ENCODE measurements at regions of chr2 and their contacts with region 1.

Region 1: DNA sequence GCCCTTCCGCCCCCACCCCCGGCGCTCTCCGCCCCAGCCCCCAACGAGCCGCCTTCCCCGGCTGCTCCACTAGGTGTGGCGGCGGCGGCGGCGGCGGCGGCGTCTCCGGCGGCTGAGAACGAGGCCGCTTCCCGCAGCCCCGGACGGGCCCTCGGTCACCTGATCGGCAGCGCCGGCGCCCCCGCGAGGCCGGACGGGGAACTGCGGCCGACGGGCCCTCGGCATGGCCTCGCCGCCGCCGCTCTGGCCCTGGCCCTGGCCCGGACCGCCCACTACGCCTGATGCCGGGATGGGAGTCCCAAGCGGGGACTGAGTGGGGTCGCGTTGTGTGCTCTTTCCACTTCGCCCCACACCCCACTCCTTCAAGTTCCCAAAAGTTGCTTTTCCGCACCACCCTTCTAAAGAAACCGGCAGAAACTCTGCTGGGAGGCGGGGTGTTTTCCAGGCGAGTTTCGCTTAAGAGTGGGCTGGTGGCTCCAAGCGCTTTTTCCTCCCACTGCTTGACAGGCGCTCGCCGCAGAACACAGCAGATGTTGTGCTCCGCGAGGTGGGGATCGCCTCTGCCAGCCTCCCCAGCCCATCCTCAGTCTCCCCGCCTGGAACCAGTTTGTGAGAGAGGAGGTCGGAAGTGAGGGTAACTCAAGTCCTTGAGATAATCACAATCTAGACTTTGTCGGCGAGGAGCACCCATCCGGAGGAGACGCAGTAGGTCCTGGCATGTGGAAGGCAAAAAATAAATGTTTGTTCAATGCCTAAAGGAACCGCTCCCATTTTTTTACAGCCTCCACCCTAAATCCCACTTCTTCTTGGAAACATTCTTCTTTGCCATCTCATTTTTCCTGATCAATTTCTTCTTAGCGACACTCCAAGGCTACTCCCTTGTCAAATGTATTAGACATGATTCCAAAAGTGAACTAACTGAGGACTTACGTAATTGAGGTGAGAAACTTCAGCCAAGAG is at the start of gene NCKAP1:
- DNase-seq: peak; percentile 96
- H3K4me3 Mint-ChIP-seq: peak within 1 kb of the TSS; percentile 85
- H3K27ac Mint-ChIP-seq: peak within 1 kb of the TSS; percentile 66
- H3K4me1 Mint-ChIP-seq: peaks cover 22% of the 10 kb centered on the region
- H3K27me3 Mint-ChIP-seq: peaks cover 72% of the 10 kb centered on the region
- total RNA-seq, gene NCKAP1: 14.5 TPM in 2 replicates

Region 2: GRCh38 chr2:182715896-182716668 is 322.5 kb before region 1 on chr2 and contains the start of gene DNAJC10:
- intact Hi-C with region 1: loop called (anchors 2 kb)
- DNase-seq: peak; percentile 97
- H3K4me3 Mint-ChIP-seq: no peak within 1 kb of the TSS
- H3K27ac Mint-ChIP-seq: no peak within 1 kb of the TSS
- H3K4me1 Mint-ChIP-seq: peaks cover 8% of the 10 kb centered on the region
- H3K27me3 Mint-ChIP-seq: peaks cover 11% of the 10 kb centered on the region
- total RNA-seq, gene DNAJC10: 68.2 and 75.1 TPM in 2 replicates

Region 3: DNA sequence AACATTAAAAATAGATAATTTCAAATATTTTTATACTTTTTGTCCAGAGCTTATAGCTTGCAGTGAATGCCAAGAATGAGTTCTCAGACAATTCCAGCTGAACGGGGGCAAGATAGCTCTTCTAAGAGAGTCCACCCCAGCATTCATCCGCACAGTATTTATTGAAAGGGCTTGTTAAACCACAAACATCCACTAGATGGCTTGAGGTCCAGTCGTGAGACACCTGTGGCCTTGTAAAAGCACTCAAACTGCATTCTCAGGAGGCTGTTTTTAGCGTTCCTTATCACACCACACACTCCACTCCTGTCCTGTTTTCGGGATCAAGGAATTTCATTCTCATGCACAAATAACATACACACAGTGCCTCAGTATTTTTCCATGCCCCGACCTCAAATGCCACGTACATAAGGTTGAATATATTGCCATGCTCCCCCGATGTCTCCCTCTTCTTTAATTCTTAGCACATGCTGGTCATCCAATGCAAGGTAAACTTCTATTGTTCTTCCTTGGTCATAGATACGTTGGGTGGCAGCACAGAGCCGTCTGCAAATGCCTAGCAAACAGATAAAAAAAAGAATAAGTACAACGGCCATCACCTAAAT is 275.2 kb before region 1 on chr2:
- intact Hi-C with region 1: no loop called
- DNase-seq: peak; percentile 60
- H3K4me3 Mint-ChIP-seq: no peak overlapping the region
- H3K27ac Mint-ChIP-seq: no peak overlapping the region
- H3K4me1 Mint-ChIP-seq: peaks cover 7% of the 10 kb centered on the region
- H3K27me3 Mint-ChIP-seq: no peaks in the 10 kb centered on the region

Region 4: DNA sequence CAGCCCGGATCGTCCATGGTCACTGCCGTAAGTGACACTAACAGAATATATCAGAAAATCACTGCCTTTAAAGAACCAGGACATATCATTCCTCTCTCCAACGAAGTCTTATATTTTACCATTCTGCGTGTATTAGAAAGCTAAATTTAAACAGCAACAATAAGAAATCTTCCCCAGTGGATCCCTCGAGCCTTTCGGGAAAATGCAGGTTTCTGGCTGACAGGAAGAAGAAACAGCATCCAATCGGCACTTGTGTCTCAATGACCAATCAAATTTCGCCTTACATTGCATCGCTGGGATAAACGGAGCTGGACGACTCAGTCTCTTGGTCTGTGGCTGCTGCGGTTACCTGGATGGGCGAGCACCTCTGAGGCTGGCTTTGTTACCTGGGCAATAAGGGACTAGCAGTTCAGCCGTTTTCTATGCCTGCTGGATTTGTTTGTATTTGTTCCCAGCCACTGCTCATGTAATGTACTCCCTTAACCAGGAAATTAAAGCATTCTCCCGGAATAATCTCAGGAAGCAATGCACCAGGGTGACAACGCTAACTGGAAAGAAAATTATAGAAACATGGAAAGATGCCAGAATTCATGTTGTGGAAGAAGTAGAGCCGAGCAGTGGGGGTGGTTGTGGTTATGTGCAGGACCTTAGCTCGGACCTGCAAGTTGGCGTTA is 40.0 kb after region 1 on chr2 and contains the start of gene DUSP19:
- intact Hi-C with region 1: loop called (anchors 1 kb)
- DNase-seq: peak; percentile 95
- H3K4me3 Mint-ChIP-seq: peak within 1 kb of the TSS; percentile 85
- H3K27ac Mint-ChIP-seq: peak within 1 kb of the TSS; percentile 59
- H3K4me1 Mint-ChIP-seq: peaks cover 13% of the 10 kb centered on the region
- H3K27me3 Mint-ChIP-seq: peaks cover 4% of the 10 kb centered on the region
- total RNA-seq, gene DUSP19: 1.0 and 2.3 TPM in 2 replicates